CD8-positive, alpha-beta memory T cell (primary cell): ENCODE measurements at regions of chr6 and their contacts with region 1.

Region 1: GRCh38 chr6:593139-593906 is 63.6 kb downstream of the HUS1B start:
- DNase-seq: peak; percentile 37 to 71 (median 46)
- H3K4me3 ChIP-seq: no peak overlapping the region
- H3K4me3 Mint-ChIP-seq: no peak overlapping the region
- H3K27ac ChIP-seq: no peak overlapping the region
- H3K27ac Mint-ChIP-seq: peak overlapping the region in 2 of 8 donors; percentile 38 to 84
- H3K4me1 ChIP-seq: no peaks in the 10 kb centered on the region
- H3K4me1 Mint-ChIP-seq: peaks cover 0 to 9% (median 0%) of the 10 kb centered on the region in 3 donors
- H3K27me3 ChIP-seq: no peaks in the 10 kb centered on the region
- H3K27me3 Mint-ChIP-seq: no peaks in the 10 kb centered on the region

Region 2: GRCh38 chr6:610882-611281 is 17.6 kb after region 1 on chr6:
- CTCF ChIA-PET with region 1: no interaction called
- POLR2A ChIA-PET with region 1: no interaction called
- DNase-seq: no peak
- H3K4me3 ChIP-seq: no peak overlapping the region
- H3K4me3 Mint-ChIP-seq: no peak overlapping the region
- H3K27ac ChIP-seq: no peak overlapping the region
- H3K27ac Mint-ChIP-seq: peak overlapping the region in 2 of 8 donors; percentile 32 to 33
- H3K4me1 ChIP-seq: no peaks in the 10 kb centered on the region
- H3K4me1 Mint-ChIP-seq: peaks cover 0 to 2% (median 0%) of the 10 kb centered on the region in 3 donors
- H3K27me3 ChIP-seq: no peaks in the 10 kb centered on the region
- H3K27me3 Mint-ChIP-seq: no peaks in the 10 kb centered on the region

Region 3: GRCh38 chr6:624979-625378 is 31.7 kb after region 1 on chr6:
- CTCF ChIA-PET with region 1: no interaction called
- POLR2A ChIA-PET with region 1: no interaction called
- DNase-seq: no peak
- H3K4me3 ChIP-seq: no peak overlapping the region
- H3K4me3 Mint-ChIP-seq: no peak overlapping the region
- H3K27ac ChIP-seq: no peak overlapping the region
- H3K27ac Mint-ChIP-seq: peak overlapping the region in 1 of 8 donors; percentile 66
- H3K4me1 ChIP-seq: peaks cover 10% of the 10 kb centered on the region
- H3K4me1 Mint-ChIP-seq: peaks cover 19 to 35% (median 23%) of the 10 kb centered on the region in 3 donors
- H3K27me3 ChIP-seq: no peaks in the 10 kb centered on the region
- H3K27me3 Mint-ChIP-seq: no peaks in the 10 kb centered on the region

Region 4: DNA sequence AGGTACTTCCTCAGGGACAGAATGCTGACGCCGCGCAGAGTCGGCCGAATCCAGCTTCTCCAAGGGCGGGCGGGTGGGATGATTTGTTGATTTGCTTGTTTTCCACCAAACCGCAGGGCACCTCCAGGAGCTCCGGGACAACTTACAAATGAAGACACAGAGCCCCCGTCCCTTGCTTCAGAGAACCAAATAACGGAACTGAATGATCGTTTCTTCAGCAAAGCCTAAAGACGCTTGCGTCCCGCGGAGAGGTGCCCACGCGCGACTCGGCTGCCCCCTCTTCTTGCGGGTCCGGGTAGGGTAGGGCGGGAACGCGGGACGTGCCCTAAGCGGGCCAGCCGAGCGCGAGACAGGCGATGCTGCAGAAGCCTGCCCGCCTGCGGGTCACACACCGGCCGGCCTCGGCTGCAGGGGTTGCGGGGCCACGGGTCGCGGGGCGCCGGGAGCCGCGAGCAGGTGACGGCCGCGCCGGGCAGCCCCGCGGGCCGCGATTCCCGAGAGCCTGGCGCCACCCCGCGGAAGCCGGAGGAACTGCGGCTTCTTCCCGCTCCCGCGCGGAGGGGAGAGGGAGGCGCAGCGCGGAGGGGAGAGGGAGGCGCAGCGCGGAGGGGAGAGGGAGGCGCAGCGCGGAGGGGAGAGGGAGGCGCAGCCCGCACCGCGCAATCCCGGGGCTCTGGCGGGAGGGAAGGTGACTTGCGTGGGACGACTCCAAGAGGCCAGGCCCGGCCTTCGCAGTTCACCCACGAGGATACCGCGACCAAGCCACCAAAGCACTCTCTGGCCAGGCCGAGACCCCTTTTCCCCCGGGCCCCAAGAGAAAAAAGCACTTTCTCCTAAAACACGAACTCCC is 788.4 kb after region 1 on chr6:
- CTCF ChIA-PET with region 1: interaction called, 15 read pairs
- POLR2A ChIA-PET with region 1: no interaction called
- DNase-seq: peak in 4 of 5 donors; percentile 19 to 46 (median 25)
- H3K4me3 ChIP-seq: no peak overlapping the region
- H3K4me3 Mint-ChIP-seq: peak overlapping the region in 5 of 7 donors; percentile 3 to 77 (median 46)
- H3K27ac ChIP-seq: no peak overlapping the region
- H3K27ac Mint-ChIP-seq: no peak overlapping the region
- H3K4me1 ChIP-seq: peaks cover 8% of the 10 kb centered on the region
- H3K4me1 Mint-ChIP-seq: peaks cover 20 to 53% (median 27%) of the 10 kb centered on the region in 3 donors
- H3K27me3 ChIP-seq: peaks cover 52% of the 10 kb centered on the region
- H3K27me3 Mint-ChIP-seq: peaks cover 49 to 68% of the 10 kb centered on the region in 2 donors

Region 5: DNA sequence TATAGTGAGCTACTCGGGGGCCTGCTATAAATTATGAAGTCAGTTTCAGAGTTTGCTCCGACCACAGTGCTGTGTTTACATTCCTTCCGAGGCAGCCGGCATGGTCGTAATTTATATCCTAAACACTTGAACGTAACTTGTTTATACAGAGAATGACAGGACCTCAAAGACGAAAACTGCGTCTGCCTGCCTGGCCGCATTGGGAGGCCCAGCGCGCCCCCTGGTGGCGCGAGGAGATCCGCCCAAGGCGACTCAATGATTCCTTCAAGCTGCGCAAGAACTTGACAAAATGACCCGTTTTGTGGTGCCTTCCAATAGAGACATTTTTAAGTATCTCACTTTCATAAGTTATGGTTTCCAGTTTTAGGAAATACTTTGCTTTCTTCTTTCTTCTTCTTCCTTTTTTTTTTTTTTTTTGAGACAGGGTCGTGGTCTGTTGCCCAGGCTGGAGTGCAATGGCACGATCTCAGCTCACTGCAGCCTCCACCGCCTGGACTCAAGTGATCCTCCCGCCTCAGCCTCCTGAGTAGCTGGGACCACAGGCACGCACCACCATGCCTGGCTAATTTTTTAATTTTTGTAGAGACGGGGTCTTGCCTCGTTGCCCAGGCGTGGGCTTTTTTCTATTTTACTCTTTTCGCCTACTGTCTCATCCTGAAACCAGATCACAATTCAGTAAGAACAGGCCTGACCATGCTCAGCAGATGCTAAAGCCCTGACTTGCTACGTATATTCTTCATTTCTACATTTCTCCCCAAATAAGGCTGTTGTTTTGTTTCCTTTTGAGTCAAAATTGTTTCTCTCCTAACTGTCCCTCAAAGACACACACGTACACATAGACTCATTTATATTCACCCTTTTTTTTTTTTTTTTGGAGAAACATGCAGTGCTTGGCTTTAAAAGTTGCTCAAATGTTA is 803.9 kb after region 1 on chr6:
- CTCF ChIA-PET with region 1: interaction called, 26 read pairs
- POLR2A ChIA-PET with region 1: no interaction called
- DNase-seq: peak; percentile 39 to 67 (median 50)
- H3K4me3 ChIP-seq: no peak overlapping the region
- H3K4me3 Mint-ChIP-seq: peak overlapping the region in 1 of 7 donors; percentile 20
- H3K27ac ChIP-seq: no peak overlapping the region
- H3K27ac Mint-ChIP-seq: peak overlapping the region in 2 of 8 donors; percentile 20 to 27
- H3K4me1 ChIP-seq: no peaks in the 10 kb centered on the region
- H3K4me1 Mint-ChIP-seq: peaks cover 5 to 15% (median 5%) of the 10 kb centered on the region in 3 donors
- H3K27me3 ChIP-seq: peaks cover 31% of the 10 kb centered on the region
- H3K27me3 Mint-ChIP-seq: peaks cover 32 to 53% of the 10 kb centered on the region in 2 donors